Activated T-helper 1 cell treated with anti-CD3 and anti-CD28 coated beads, Interleukin-12 subunit alpha, Interleukin-12 subunit beta, Interleukin-2, Interleukin-4 antibody, amounts not matched to agents 30 ng/mL and 10 ng/mL and 1 ng/mL, durations not matched to agents 14 hours and 24 hours and 36 hours (primary cell): ENCODE measurements at regions of chr4 and their contacts with region 1.

Region 1: DNA sequence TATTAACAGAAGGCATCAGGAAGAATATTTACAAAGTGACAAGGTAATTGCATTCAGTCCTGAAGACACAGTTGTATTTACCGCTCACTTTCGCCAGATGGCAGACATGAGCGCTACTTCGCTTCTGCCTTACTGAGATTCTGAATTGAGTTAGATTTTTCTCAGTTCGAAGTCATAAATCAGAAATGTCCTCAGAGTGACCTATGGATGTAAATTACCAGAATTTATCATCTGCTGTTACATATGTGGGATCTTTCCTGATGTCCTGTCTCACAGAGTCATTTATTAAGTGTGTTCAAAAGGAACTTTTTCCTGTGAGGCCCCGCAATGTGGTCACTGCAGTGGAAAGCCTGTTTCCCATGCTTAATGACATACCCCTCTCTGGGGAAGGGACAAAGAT is 97.3 kb upstream of the DCLK2 start:
- DNase-seq: peak; percentile 19
- H3K4me3 Mint-ChIP-seq: no peak overlapping the region
- H3K27ac Mint-ChIP-seq: no peak overlapping the region
- H3K4me1 Mint-ChIP-seq: peaks cover 11% of the 10 kb centered on the region
- H3K27me3 Mint-ChIP-seq: peaks cover 7% of the 10 kb centered on the region

Region 2: DNA sequence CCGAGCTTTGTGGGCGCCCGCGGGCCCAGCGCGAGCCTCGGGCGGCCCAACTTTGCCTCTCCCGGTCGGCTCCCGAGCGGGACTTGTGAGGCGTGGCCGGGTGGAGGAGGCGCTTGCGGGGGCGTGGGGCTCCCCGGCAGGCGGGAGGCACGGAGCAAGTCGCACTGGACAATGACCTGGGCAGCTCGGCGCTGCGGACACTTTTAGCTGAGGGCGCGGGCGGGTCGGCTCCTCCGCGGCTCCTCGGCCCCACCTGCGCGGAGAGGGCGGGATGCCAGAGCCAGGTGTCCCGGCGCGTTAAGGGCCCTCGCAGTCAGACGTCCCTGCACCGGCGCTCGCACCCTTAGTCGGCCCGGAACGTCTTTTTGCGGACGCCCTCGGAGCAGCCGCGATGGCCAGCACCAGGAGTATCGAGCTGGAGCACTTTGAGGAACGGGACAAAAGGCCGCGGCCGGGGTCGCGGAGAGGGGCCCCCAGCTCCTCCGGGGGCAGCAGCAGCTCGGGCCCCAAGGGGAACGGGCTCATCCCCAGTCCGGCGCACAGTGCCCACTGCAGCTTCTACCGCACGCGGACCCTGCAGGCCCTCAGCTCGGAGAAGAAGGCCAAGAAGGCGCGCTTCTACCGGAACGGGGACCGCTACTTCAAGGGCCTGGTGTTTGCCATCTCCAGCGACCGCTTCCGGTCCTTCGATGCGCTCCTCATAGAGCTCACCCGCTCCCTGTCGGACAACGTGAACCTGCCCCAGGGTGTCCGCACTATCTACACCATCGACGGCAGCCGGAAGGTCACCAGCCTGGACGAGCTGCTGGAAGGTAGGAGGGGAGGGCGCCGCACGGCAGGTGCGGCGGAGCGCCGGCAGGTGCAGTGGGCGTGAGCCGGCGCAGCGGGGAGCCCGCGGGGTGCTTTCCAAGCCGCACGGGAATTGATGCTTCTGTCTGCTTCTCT is 98.0 kb after region 1 on chr4:
- intact Hi-C with region 1: loop called (anchors 1 kb)
- DNase-seq: no peak
- H3K4me3 Mint-ChIP-seq: peak overlapping the region; percentile 54
- H3K27ac Mint-ChIP-seq: no peak overlapping the region
- H3K4me1 Mint-ChIP-seq: no peaks in the 10 kb centered on the region
- H3K27me3 Mint-ChIP-seq: peaks cover 53% of the 10 kb centered on the region

Region 3: GRCh38 chr4:150209140-150209829 is 228.3 kb after region 1 on chr4:
- intact Hi-C with region 1: loop called (anchors 1 kb)
- DNase-seq: no peak
- H3K4me3 Mint-ChIP-seq: no peak overlapping the region
- H3K27ac Mint-ChIP-seq: no peak overlapping the region
- H3K4me1 Mint-ChIP-seq: no peaks in the 10 kb centered on the region
- H3K27me3 Mint-ChIP-seq: peaks cover 9% of the 10 kb centered on the region

Region 4: DNA sequence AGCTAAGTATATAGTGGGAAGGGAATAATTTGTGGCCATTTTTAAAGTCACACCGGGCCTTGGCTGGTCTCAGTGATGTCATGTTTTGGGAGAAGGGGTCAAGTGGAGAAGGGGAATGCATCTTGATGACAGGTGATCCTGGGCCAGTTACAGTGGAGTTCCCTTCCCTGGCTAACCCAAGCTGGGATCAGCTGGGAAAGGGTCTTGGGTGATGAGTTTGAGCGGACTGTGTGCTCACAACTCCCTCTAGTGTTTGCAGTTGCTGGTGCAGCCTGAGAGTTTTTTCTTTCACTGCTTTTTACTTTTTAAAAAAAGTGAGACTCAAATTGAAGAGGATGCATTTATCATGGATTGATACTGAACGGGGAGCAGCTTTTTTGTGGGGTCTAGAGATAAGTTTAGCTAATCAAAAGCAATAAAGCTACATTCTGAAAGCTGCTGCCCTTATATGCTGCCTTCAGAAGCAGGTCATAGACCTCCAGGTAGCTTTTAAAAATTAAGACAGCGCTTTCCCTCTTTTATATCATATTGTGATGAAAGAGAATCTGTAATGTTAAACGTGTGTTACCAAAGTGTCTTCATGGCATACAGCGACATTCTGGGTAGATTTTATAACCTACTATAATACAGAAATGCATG is 262.0 kb after region 1 on chr4:
- intact Hi-C with region 1: loop called (anchors 1 kb)
- DNase-seq: no peak
- H3K4me3 Mint-ChIP-seq: no peak overlapping the region
- H3K27ac Mint-ChIP-seq: no peak overlapping the region
- H3K4me1 Mint-ChIP-seq: no peaks in the 10 kb centered on the region
- H3K27me3 Mint-ChIP-seq: peaks cover 11% of the 10 kb centered on the region

Region 5: DNA sequence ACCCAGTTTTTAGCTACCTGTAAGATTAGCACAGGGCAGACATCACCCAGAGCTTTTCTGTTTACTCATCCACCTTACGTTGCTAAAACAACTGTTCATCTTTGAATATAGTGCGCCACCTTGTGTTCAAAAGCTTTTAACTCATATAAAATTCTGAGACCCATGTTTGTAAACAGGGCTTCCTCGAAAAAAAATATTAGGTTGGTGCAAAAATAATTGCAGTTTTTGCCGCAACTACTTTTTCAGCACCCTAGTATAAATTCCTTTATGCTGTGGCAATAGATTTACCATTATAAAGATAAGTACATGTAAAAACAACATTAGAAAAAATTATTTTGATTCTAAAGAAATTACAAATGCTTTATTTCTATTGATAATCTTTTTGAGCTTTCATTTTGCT is 886.2 kb after region 1 on chr4:
- intact Hi-C with region 1: loop called (anchors 1 kb)
- DNase-seq: peak; percentile 15
- H3K4me3 Mint-ChIP-seq: no peak overlapping the region
- H3K27ac Mint-ChIP-seq: no peak overlapping the region
- H3K4me1 Mint-ChIP-seq: no peaks in the 10 kb centered on the region
- H3K27me3 Mint-ChIP-seq: no peaks in the 10 kb centered on the region